Activated naive CD8-positive, alpha-beta T cell treated with anti-CD3 and anti-CD28 coated beads, Interleukin-2, amount 10 ng/mL, durations not matched to agents 7 days and 5 days (primary cell): ENCODE measurements at regions of chr6 and their contacts with region 1.

Region 1: DNA sequence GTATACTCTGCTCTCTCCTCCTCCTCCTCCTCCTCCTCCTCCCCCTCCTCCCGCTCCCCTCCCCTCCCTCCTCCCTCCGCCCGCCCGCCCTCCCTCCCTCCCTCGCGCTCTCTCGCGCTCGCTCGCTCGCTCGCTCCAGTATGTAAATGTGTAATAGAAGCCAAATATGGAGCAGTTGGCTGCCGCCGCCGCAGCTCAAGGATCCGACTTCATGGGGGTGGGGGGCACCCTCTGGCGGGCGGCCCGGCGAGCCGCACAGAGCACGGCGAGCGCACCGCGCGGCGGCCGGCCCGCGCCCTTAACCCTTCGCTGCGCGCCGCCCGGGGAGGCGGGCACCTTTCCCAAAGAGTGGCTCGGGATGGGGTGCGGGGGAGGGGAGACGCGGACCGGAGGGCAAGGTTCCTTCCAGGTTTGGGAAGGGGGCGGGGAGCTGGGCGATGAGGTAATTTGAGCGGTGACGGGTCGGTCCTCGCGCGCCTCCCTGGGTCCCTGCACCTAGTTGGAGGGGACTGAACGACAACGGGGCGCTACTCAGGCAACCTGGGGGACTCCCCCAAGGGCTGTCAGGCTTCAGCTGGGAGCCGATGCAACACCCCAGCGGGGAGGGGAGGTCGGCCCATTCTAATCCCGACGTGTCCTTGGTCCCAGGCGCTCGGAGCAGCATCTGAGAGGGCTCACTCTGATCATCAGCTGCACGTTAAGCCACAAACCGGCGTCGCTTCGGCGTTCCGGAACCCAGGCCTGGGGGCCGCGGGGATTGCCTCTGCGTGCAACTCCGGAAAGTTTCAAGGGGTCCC is 409 bp upstream of the ATXN1 start:
- DNase-seq: peak; percentile 89
- ATAC-seq: peak; percentile 74
- H3K4me3 Mint-ChIP-seq: peak overlapping the region; percentile 100
- H3K27ac Mint-ChIP-seq: peak overlapping the region; percentile 100
- H3K4me1 Mint-ChIP-seq: peaks cover 39% of the 10 kb centered on the region
- H3K27me3 Mint-ChIP-seq: no peaks in the 10 kb centered on the region

Region 2: GRCh38 chr6:15017261-15017660 is 1744.4 kb before region 1 on chr6:
- POLR2A ChIA-PET with region 1: no interaction called
- DNase-seq: no peak
- ATAC-seq: no peak
- H3K4me3 Mint-ChIP-seq: no peak overlapping the region
- H3K27ac Mint-ChIP-seq: no peak overlapping the region
- H3K4me1 Mint-ChIP-seq: peaks cover 7% of the 10 kb centered on the region
- H3K27me3 Mint-ChIP-seq: peaks cover 15% of the 10 kb centered on the region

Region 3: DNA sequence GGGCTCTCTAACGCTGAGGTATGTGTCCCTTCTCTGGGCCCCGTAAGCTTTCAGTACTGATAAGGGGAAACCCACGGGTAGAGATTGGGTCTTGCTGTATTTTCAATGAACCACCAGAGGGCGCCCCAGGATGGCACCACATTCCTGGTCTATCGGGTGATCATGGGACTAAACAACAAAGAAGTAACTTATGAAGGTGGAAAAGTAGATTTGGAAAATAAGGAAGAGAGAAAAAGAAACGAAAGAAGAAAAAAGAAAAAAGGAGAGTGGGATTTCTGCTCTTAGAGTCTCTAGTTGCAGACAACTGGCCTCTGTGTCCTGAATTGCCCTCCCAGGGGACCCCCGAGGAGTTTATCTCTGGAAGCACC is 429.5 kb before region 1 on chr6:
- POLR2A ChIA-PET with region 1: interaction called, 11 read pairs
- DNase-seq: peak; percentile 71
- ATAC-seq: peak; percentile 91
- H3K4me3 Mint-ChIP-seq: no peak overlapping the region
- H3K27ac Mint-ChIP-seq: no peak overlapping the region
- H3K4me1 Mint-ChIP-seq: no peaks in the 10 kb centered on the region
- H3K27me3 Mint-ChIP-seq: no peaks in the 10 kb centered on the region

Region 4: GRCh38 chr6:16420715-16421461 is 340.8 kb before region 1 on chr6:
- POLR2A ChIA-PET with region 1: interaction called, 12 read pairs
- DNase-seq: no peak
- ATAC-seq: peak; percentile 91
- H3K4me3 Mint-ChIP-seq: peak overlapping the region; percentile 65
- H3K27ac Mint-ChIP-seq: peak overlapping the region; percentile 88
- H3K4me1 Mint-ChIP-seq: peaks cover 41% of the 10 kb centered on the region
- H3K27me3 Mint-ChIP-seq: no peaks in the 10 kb centered on the region

Region 5: DNA sequence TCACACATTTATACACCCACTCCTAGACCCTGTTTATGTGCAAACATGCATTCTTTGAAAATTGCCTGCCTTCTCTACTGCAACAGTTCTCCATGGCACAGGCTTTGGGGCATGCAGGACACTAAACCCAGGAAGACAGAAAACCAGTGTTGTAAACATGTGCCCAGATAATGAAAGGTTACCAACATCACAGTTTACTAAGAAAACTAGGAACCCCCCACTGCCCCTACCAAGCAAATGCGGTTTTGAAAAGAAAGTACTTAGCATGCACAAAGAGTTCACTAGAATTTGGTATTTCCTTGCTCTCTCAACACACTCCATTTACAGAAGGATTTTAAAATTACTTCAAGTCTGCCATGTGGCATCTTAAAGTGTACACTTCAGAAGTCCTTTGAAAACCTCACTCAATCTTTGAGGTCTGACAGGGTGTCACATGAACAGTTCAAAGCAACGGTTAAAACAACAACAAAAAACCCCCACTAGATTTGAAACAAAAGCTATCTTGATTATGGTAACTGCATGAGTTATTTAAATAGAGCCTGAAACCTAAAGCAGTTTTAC is 278.3 kb before region 1 on chr6:
- POLR2A ChIA-PET with region 1: interaction called, 12 read pairs
- DNase-seq: no peak
- ATAC-seq: peak; percentile 57
- H3K4me3 Mint-ChIP-seq: peak overlapping the region; percentile 64
- H3K27ac Mint-ChIP-seq: peak overlapping the region; percentile 87
- H3K4me1 Mint-ChIP-seq: peaks cover 80% of the 10 kb centered on the region
- H3K27me3 Mint-ChIP-seq: no peaks in the 10 kb centered on the region

Region 6: DNA sequence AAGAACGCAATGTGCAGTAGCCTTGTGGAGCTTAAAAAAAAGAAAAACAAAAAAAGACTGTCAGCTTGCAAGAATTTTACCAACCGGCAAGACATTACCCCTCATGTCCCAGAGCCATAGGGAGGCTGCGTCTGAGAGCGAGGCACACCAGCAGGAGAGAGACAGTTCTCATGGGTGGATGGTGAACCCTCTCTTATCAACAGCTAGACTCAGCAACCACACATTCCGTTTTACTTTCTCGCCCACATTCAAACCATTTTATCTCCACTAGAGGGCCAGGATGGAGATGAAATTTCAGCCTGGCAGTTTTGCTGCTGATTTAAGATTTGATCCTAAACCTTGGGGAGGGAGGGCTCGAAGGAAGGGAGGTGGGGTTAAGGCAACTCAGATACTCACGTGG is 247.4 kb before region 1 on chr6:
- POLR2A ChIA-PET with region 1: interaction called, 42 read pairs
- DNase-seq: no peak
- ATAC-seq: peak; percentile 62
- H3K4me3 Mint-ChIP-seq: peak overlapping the region; percentile 2
- H3K27ac Mint-ChIP-seq: peak overlapping the region; percentile 13
- H3K4me1 Mint-ChIP-seq: peaks cover 53% of the 10 kb centered on the region
- H3K27me3 Mint-ChIP-seq: no peaks in the 10 kb centered on the region

Region 7: GRCh38 chr6:16731478-16732051 is 30.1 kb before region 1 on chr6:
- POLR2A ChIA-PET with region 1: interaction called, 11 read pairs
- DNase-seq: no peak
- ATAC-seq: peak; percentile 89
- H3K4me3 Mint-ChIP-seq: peak overlapping the region; percentile 70
- H3K27ac Mint-ChIP-seq: peak overlapping the region; percentile 85
- H3K4me1 Mint-ChIP-seq: peaks cover 39% of the 10 kb centered on the region
- H3K27me3 Mint-ChIP-seq: no peaks in the 10 kb centered on the region